T-cell (primary cell): ENCODE measurements at regions of chr4 and their contacts with region 1.

Region 1: GRCh38 chr4:41207305-41207831 is 7.0 kb downstream of the APBB2 start:
- DNase-seq: no peak
- ATAC-seq: no peak
- H3K4me3 ChIP-seq: no peak overlapping the region
- H3K4me3 Mint-ChIP-seq: no peak overlapping the region
- H3K27ac ChIP-seq: no peak overlapping the region
- H3K27ac Mint-ChIP-seq: no peak overlapping the region
- H3K4me1 ChIP-seq: no peaks in the 10 kb centered on the region
- H3K4me1 Mint-ChIP-seq: no peaks in the 10 kb centered on the region
- H3K27me3 ChIP-seq: peaks cover 12 to 13% of the 10 kb centered on the region in 2 experiments
- H3K27me3 Mint-ChIP-seq: peaks cover 24 to 52% of the 10 kb centered on the region in 2 donors

Region 2: DNA sequence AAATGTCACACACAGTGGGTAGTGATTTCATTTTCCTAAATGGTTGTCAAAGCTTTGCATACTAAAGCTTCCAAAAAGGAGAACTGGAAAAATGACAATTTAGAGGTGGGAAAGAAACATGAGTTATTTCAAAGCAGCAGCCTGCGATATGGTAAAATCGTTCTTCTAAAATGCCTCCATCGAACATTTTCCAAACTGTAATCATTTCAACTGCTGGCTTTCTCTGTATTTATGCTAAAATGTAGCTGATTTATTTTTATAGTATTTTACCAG is 37.9 kb before region 1 on chr4:
- CTCF ChIA-PET with region 1: no interaction called
- POLR2A ChIA-PET with region 1: interaction called in 1 of 2 experiments, 12 read pairs
- DNase-seq: no peak
- ATAC-seq: no peak
- H3K4me3 ChIP-seq: no peak overlapping the region
- H3K4me3 Mint-ChIP-seq: no peak overlapping the region
- H3K27ac ChIP-seq: no peak overlapping the region
- H3K27ac Mint-ChIP-seq: no peak overlapping the region
- H3K4me1 ChIP-seq: no peaks in the 10 kb centered on the region
- H3K4me1 Mint-ChIP-seq: no peaks in the 10 kb centered on the region
- H3K27me3 ChIP-seq: peaks cover 0 to 3% of the 10 kb centered on the region in 2 experiments
- H3K27me3 Mint-ChIP-seq: peaks cover 3 to 5% of the 10 kb centered on the region in 2 donors

Region 3: GRCh38 chr4:42293967-42294822 is 1086.8 kb after region 1 on chr4:
- CTCF ChIA-PET with region 1: no interaction called
- POLR2A ChIA-PET with region 1: no interaction called
- DNase-seq: no peak
- ATAC-seq: no peak
- H3K4me3 ChIP-seq: no peak overlapping the region
- H3K4me3 Mint-ChIP-seq: no peak overlapping the region
- H3K27ac ChIP-seq: no peak overlapping the region
- H3K27ac Mint-ChIP-seq: no peak overlapping the region
- H3K4me1 ChIP-seq: no peaks in the 10 kb centered on the region
- H3K4me1 Mint-ChIP-seq: no peaks in the 10 kb centered on the region
- H3K27me3 ChIP-seq: peaks cover 0 to 2% of the 10 kb centered on the region in 2 experiments
- H3K27me3 Mint-ChIP-seq: peaks cover 14 to 17% of the 10 kb centered on the region in 2 donors